Vagina (tissue), 2 donors: ENCODE measurements at regions of chr10 and their contacts with region 1.

Region 1: GRCh38 chr10:133394064-133394663 is at the start of gene MTG1:
- DNase-seq: peak in 1 of 2 donors; percentile 86
- H3K4me3 ChIP-seq: peak within 1 kb of the TSS; percentile 86 to 93
- H3K27ac ChIP-seq: peak within 1 kb of the TSS; percentile 77
- H3K4me1 ChIP-seq: peaks cover 18% of the 10 kb centered on the region
- H3K27me3 ChIP-seq: no peaks in the 10 kb centered on the region
- CTCF ChIP-seq: peak in 2 of 3 experiments; percentile 11 to 18
- POLR2A ChIP-seq: peak in 1 of 2 donors; percentile 57
- total RNA-seq, gene MTG1: 57.5 TPM

Region 2: DNA sequence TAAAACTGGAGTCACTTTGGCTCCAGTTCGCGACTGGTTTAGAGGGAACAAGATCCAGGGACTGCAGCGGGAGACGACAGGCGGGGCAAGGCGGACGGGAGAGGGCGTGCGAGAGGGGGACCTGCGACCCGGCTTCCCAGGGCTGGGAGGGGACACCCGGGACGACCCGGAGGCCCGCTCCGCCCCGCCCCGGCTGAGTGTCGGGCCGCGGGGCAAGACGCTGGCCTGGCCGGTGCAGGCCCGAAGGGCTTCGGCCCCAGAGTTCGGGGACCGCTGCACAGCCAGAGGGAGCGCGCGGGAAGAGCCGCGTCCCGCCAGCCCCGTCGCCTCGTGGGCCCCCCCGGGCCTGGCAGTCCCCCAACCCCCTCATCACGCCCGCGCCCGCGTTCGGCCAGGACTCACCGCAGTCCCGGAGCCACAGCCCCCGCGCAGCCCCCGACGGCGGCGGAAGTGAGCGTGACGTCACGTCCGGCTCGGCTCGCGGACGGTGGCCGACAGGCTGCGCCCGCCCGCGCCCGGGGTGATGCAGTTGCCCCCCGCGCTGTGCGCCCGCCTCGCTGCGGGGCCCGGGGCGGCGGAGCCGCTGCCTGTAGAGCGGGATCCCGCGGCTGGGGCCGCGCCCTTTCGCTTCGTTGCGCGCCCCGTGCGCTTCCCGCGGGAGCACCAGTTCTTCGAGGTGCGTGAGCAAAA is 85.6 kb before region 1 on chr10 and contains the starts of genes TUBGCP2 and ZNF511:
- intact Hi-C with region 1: loop called (anchors 5 kb)
- DNase-seq: no peak
- H3K4me3 ChIP-seq: peak within 1 kb of the TSS; percentile 89 to 94
- H3K27ac ChIP-seq: peak within 1 kb of the TSS; percentile 92
- H3K4me1 ChIP-seq: peaks cover 46% of the 10 kb centered on the region
- H3K27me3 ChIP-seq: no peaks in the 10 kb centered on the region
- CTCF ChIP-seq: no peak
- POLR2A ChIP-seq: peak in 1 of 2 donors; percentile 36
- total RNA-seq, gene TUBGCP2: 41.7 TPM
- total RNA-seq, gene ZNF511: 36.3 TPM